ENCODE measurements at regions of chr16 and their contacts with region 1.

Region 1: DNA sequence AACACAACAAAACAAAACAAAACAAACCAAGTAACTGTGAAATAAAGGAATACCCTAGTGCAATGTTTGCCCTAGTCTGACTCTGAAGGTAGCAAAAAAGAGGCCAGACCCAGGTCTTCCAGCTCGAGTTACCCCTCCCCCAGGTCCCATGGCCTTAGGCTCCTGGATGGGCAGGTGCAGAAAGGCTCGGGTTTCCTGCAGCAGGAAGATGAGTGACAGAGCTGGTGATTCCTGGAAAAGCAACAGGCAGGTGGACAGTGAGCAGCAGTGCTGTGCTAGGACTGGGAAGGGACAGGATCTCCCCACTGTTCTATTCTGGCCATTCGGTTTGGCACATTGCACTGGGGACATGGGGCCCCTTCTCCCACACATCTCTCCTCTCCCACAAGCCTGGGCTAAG is 42.9 kb upstream of the MRTFB start:
- DNase-seq: no peak
- ATAC-seq: peak; percentile 59 to 93 (median 80)
- H3K4me3 ChIP-seq: no peak overlapping the region
- H3K27ac ChIP-seq: peak overlapping the region; percentile 70
- H3K4me1 ChIP-seq: peaks cover 35% of the 10 kb centered on the region
- H3K27me3 ChIP-seq: no peaks in the 10 kb centered on the region
- CTCF ChIP-seq: no peak

Region 2: GRCh38 chr16:14070877-14071575 is 42.8 kb after region 1 on chr16 and contains the start of gene MRTFB:
- intact Hi-C with region 1: loop called in 1 of 2 experiments (anchors 5 kb)
- DNase-seq: peak; percentile 83 to 88
- ATAC-seq: peak; percentile 88 to 95 (median 92)
- H3K4me3 ChIP-seq: peak within 1 kb of the TSS; percentile 79
- H3K27ac ChIP-seq: peak within 1 kb of the TSS; percentile 79
- H3K4me1 ChIP-seq: peaks cover 7% of the 10 kb centered on the region
- H3K27me3 ChIP-seq: no peaks in the 10 kb centered on the region
- CTCF ChIP-seq: no peak
- total RNA-seq, gene MRTFB: 14.1 to 26.3 (median 20.0) TPM

Measured in psoas muscle (tissue), 8 donors.